ENCODE measurements at regions of chr3 and their contacts with region 1.

Region 1: DNA sequence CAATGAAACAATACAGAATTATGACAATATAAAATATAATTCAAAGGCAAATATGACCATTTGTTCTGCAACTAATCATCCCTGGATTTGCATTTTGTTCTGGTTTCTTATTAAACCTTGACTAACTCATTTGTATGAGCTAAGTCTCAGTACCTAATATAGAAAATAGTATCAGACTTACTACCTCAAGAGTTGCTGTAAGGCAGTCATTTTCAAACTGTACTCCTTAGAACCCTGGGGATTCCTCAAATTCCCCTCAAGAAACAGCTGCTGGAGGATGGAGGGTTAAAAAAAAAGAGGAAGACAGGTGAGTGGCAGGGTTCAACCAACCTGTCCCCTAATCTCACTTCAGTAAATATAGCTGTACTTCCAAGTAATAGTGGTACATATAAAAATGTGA is 11.1 kb downstream of the ZBTB11 start:
- DNase-seq: no peak
- ATAC-seq: no peak
- H3K4me3 ChIP-seq: no peak overlapping the region
- H3K4me3 Mint-ChIP-seq: no peak overlapping the region
- H3K27ac ChIP-seq: no peak overlapping the region
- H3K27ac Mint-ChIP-seq: no peak overlapping the region
- H3K4me1 ChIP-seq: no peaks in the 10 kb centered on the region
- H3K4me1 Mint-ChIP-seq: peaks cover 2% of the 10 kb centered on the region
- H3K27me3 ChIP-seq: no peaks in the 10 kb centered on the region
- H3K27me3 Mint-ChIP-seq: no peaks in the 10 kb centered on the region
- CTCF ChIP-seq: no peak

Region 2: DNA sequence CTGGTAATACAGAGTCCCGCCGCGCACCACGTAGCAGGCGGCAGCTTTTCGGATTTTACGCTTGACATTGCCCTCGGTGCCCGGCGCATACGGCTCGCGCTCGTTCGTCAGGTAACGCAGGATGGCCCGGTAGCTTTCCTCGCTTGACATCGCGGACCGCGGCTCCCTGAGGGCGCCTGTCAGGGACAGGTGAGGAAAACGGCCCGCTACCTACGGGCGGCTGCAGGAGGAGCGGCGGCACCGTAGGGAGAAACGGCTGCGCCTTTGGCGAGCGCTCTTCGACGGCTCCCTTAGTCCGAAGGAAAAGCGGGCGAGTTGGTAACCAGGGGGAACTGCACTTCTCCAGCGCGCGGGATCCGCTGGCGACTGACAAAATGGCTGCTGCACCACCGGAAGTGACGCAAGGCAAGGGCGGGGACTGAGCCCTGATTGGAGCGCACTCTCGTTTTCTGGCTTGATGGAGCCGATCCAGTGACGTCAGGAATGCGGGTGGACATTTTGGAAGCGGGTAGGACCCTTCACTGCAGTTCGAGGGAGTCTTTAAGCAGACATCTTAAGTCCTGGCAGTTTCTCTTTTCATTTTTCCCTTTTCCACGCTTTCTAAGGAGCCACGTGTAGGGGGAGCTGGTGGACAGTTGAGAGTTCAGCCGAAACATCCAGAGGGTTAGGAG is 11.0 kb after region 1 on chr3 and contains the start of gene ZBTB11:
- CTCF ChIA-PET with region 1: interaction called, 5 read pairs
- POLR2A ChIA-PET with region 1: interaction called, 10 read pairs
- intact Hi-C with region 1: no loop called
- DNase-seq: peak; percentile 99 to 100 (median 100)
- ATAC-seq: peak; percentile 67
- H3K4me3 ChIP-seq: peak within 1 kb of the TSS; percentile 71
- H3K4me3 Mint-ChIP-seq: peak within 1 kb of the TSS; percentile 98
- H3K27ac ChIP-seq: peak within 1 kb of the TSS; percentile 97 to 99
- H3K27ac Mint-ChIP-seq: peak within 1 kb of the TSS; percentile 100
- H3K4me1 ChIP-seq: peaks cover 36% of the 10 kb centered on the region
- H3K4me1 Mint-ChIP-seq: peaks cover 60% of the 10 kb centered on the region
- H3K27me3 ChIP-seq: no peaks in the 10 kb centered on the region
- H3K27me3 Mint-ChIP-seq: peaks cover 3% of the 10 kb centered on the region
- CTCF ChIP-seq: no peak
- total RNA-seq, gene ZBTB11: 73.5 to 76.6 TPM